ENCODE measurements at regions of chr7 and their contacts with region 1.

Region 1: DNA sequence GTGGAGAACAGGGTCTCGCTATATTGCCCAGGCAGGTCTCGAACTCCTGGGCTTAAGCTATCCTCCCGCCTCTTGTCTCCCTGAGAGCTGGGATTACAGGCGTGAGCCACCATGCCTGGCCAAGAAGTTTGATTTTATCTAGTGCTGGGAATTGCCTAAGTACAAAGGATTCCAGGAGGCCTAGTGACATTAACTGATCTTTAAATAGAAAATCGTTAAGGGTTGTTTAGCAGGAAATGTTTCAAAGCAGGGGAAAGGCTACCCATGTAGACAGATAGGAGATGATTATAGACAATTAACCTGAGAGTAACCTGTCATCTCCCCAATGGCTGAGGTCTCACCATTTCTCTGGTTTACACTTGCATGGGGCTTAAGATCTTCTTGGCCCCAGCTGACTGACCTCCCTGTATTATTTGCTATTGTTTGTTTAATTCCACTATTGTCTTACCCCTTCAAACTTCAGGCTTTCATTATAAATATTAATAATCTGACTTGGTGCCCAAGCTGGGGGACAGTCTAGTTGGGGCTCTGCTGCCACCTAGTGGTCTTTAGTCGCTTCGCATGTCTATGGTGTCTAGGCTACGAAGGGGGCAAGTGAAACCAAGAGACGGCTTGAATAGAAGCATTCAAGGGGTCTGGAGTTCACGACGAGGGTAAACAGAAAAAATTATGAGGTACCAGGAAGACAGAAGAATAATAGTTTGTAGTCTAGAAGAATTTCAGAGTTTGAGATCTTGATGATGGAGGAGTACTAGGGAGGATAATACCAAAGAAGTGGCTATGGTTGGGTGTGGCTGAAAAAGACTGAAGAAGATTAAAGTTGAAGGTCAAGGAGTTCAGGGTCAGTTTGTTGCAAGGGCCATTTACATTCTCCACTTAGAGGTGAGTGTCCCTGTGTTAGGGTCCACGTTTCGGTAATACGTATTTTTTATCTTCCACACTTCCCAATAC is 40.4 kb upstream of the BPGM start:
- DNase-seq: peak; percentile 41 to 76 (median 62)
- H3K4me3 ChIP-seq: peak overlapping the region in 21 of 59 donors; percentile 5 to 45 (median 27)
- H3K27ac ChIP-seq: peak overlapping the region in 4 of 59 donors; percentile 4 to 34 (median 16)
- H3K27me3 ChIP-seq: peaks cover 0 to 6% (median 0%) of the 10 kb centered on the region in 45 donors
- CTCF ChIP-seq: peak; percentile 70 to 99 (median 93)

Region 2: GRCh38 chr7:134432296-134433152 is 173.7 kb before region 1 on chr7:
- intact Hi-C with region 1: loop called (anchors 1 to 5 kb)
- DNase-seq: peak; percentile 49 to 84 (median 76)
- H3K4me3 ChIP-seq: peak overlapping the region; percentile 1 to 69 (median 51)
- H3K27ac ChIP-seq: peak overlapping the region in 58 of 59 donors; percentile 12 to 91 (median 74)
- H3K27me3 ChIP-seq: no peaks in the 10 kb centered on the region
- CTCF ChIP-seq: peak; percentile 62 to 97 (median 85)

Region 3: GRCh38 chr7:134458806-134459698 is 147.2 kb before region 1 on chr7 and contains the start of gene AKR1B1:
- intact Hi-C with region 1: loop called (anchors 5 kb)
- DNase-seq: peak; percentile 81 to 96 (median 92)
- H3K4me3 ChIP-seq: peak within 1 kb of the TSS; percentile 58 to 99 (median 92)
- H3K27ac ChIP-seq: peak within 1 kb of the TSS; percentile 14 to 97 (median 87)
- H3K27me3 ChIP-seq: no peaks in the 10 kb centered on the region
- CTCF ChIP-seq: peak; percentile 33 to 88 (median 64)
- total RNA-seq, gene AKR1B1: 77.9 to 140 (median 103) TPM

Region 4: DNA sequence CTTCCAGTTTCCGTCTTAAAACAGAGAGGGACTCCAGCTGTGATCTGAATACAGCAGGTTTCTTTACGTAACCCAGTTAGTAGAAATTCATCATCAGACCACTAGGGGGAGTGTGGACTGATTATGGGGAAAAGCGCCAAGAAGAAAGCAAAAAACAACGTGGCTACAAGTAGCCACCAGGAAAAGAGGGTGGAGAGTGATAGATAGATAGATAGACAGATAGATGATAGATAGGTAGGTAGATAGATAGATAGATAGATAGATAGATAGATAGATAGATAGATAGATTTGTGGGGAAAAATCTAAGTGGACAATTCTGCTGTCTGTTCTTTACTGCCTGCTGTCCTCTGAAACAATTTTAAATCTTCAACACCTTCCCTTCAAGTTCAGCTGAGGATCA is 91.6 kb before region 1 on chr7:
- intact Hi-C with region 1: loop called (anchors 2 kb)
- DNase-seq: peak in 1 of 10 donors; percentile 11
- H3K4me3 ChIP-seq: no peak overlapping the region
- H3K27ac ChIP-seq: no peak overlapping the region
- H3K27me3 ChIP-seq: no peaks in the 10 kb centered on the region
- CTCF ChIP-seq: peak; percentile 71 to 92 (median 86)

Region 5: DNA sequence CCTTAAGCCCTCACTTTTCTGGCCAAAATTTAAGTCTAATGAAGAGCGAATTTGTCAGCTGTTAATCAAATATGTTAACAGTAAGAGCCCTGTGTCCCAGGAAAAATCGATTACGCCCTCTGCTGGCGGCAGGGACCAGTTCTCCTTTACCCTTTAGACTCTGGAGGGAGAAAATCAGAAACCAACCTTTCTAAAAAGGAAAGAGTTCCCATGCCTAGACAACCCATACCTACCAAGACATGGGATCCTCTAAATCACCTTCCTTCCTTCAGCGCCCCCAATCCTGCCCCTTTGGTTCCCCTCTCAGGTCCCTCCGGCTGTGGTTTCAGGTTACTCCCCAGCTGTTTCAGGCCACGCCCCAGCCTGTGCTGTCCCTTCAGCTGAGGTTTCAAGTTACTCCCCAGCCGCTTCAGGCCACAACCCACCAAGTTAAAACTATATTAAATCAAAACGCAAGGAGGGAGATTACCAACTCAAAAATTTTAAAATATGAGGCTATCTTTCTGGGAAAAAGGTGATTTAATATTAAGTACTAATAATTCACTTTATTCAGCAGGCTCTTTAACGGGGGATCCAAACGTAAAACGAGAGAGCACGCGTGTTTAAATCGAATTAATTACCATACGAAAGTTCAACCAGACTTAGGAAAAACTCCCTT is 58.7 kb before region 1 on chr7:
- intact Hi-C with region 1: loop called (anchors 2 to 10 kb)
- DNase-seq: peak; percentile 47 to 70 (median 62)
- H3K4me3 ChIP-seq: peak overlapping the region in 23 of 59 donors; percentile 4 to 42 (median 30)
- H3K27ac ChIP-seq: peak overlapping the region in 2 of 59 donors; percentile 7 to 10
- H3K27me3 ChIP-seq: peaks cover 0 to 5% (median 0%) of the 10 kb centered on the region in 45 donors
- CTCF ChIP-seq: peak; percentile 56 to 88 (median 76)

Region 6: GRCh38 chr7:134724606-134725005 is 118.4 kb after region 1 on chr7:
- intact Hi-C with region 1: no loop called
- DNase-seq: no peak
- H3K4me3 ChIP-seq: no peak overlapping the region
- H3K27ac ChIP-seq: no peak overlapping the region
- H3K27me3 ChIP-seq: no peaks in the 10 kb centered on the region
- CTCF ChIP-seq: peak in 8 of 56 donors; percentile 9 to 27 (median 16)

Measured in dorsolateral prefrontal cortex (tissue), 120 donors.